A673 (cell line): ENCODE measurements at regions of chr5 and their contacts with region 1.

Region 1: DNA sequence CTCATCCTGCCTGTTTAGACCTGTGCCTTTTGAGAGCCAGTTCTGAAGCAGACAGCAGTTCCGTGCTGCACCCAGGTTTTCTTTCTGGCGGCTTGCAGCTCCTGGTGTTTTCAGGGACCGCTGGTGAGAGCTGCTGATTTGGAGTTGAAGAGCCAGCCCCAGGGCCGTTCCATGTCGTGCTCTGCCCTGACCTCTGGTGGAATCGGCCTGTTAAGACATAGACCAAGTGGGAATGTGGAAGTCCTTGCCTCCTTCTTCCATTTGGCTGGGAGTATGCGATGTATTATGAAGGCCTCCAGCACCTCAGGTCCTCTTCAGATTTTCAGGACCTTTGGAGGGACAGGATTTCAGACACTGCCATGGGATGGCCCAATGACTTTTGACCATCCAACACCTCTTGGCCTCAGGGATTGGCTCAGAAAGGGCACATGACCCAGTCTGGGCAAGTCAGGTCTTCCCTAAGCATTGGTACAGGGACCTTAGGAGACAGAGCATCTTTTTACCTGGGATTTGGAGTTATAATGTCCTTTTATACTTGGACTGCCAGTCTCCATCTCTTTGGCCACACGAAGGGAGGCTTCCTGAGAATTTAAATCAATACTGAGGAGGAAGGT is 136.1 kb upstream of the CLINT1 start:
- DNase-seq: peak; percentile 64
- H3K4me3 ChIP-seq: no peak overlapping the region
- H3K27ac ChIP-seq: no peak overlapping the region
- H3K4me1 ChIP-seq: no peaks in the 10 kb centered on the region
- H3K27me3 ChIP-seq: no peaks in the 10 kb centered on the region
- CTCF ChIP-seq: peak; percentile 58

Region 2: DNA sequence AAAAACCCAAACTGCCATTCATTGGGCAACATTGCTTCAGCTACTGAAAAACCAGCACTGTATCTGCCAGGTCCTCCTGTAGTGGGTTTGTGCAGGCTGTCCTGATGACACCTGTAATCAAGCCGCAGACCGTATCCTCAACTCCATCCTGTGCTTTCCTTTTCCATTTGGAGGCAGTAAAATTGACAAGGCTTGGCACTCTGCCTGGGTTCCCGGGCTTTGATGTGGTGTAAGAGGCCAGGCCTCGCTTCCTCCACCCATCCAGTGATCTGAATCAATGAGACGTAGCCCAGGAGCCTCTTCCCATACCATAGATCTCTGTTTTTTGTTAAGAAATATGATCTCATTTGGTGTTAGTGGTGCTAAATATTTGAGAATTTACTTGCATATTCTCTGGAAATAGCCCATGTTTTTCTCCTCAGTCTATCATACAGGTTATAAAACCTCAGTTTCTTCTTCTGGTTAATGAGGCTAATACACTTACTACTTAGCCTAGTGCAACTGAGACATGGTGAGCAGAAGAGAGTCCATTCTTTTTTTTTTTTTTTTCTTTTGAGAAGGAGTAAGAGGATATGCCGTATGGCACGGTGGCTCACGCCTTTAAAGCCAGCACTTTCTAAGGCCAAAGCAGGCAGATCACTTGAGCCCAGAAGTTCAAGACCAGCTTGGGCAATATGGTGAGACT is 216.8 kb before region 1 on chr5:
- CTCF ChIA-PET with region 1: no interaction called
- POLR2A ChIA-PET with region 1: interaction called, 10 read pairs
- intact Hi-C with region 1: no loop called
- DNase-seq: peak; percentile 10
- H3K4me3 ChIP-seq: no peak overlapping the region
- H3K27ac ChIP-seq: no peak overlapping the region
- H3K4me1 ChIP-seq: peaks cover 4% of the 10 kb centered on the region
- H3K27me3 ChIP-seq: no peaks in the 10 kb centered on the region
- CTCF ChIP-seq: no peak

Region 3: GRCh38 chr5:158119961-158120723 is 125.1 kb after region 1 on chr5:
- CTCF ChIA-PET with region 1: no interaction called
- POLR2A ChIA-PET with region 1: no interaction called
- intact Hi-C with region 1: no loop called
- DNase-seq: peak; percentile 4
- H3K4me3 ChIP-seq: no peak overlapping the region
- H3K27ac ChIP-seq: no peak overlapping the region
- H3K4me1 ChIP-seq: no peaks in the 10 kb centered on the region
- H3K27me3 ChIP-seq: no peaks in the 10 kb centered on the region
- CTCF ChIP-seq: no peak